A673 (cell line): ENCODE measurements at regions of chr17 and their contacts with region 1.

Region 1: GRCh38 chr17:12909046-12909445 is 108.8 kb downstream of the ELAC2 start:
- DNase-seq: no peak
- H3K4me3 ChIP-seq: no peak overlapping the region
- H3K27ac ChIP-seq: no peak overlapping the region
- H3K4me1 ChIP-seq: no peaks in the 10 kb centered on the region
- H3K27me3 ChIP-seq: peaks cover 19% of the 10 kb centered on the region
- CTCF ChIP-seq: no peak

Region 2: DNA sequence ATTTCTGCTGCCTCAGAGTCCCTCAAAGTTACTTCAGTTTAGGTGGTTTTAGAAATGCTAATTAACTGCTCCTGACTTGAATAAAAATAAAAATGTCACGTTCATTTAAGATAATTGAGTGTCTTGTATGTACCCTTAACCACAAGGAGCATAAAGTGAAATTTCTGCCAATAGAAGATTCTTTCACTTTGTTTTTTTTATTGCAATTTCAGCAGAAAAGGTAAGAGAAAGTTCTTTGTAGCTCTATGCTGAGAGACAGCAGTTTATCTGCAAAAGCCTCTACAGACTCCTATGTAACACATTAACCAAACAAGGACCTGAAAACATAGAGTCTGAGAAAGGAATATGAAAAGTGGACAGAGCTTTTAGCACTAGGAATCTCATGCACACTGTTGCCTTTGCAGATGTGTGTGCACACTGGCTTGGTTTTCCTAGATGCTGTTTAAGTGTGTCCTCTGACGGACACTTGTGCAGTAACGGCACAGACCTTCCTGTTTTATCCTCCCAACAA is 108.1 kb before region 1 on chr17:
- CTCF ChIA-PET with region 1: no interaction called
- POLR2A ChIA-PET with region 1: no interaction called
- intact Hi-C with region 1: no loop called
- DNase-seq: no peak
- H3K4me3 ChIP-seq: no peak overlapping the region
- H3K27ac ChIP-seq: no peak overlapping the region
- H3K4me1 ChIP-seq: no peaks in the 10 kb centered on the region
- H3K27me3 ChIP-seq: no peaks in the 10 kb centered on the region
- CTCF ChIP-seq: no peak

Region 3: GRCh38 chr17:12859520-12859919 is 49.5 kb before region 1 on chr17:
- CTCF ChIA-PET with region 1: no interaction called
- POLR2A ChIA-PET with region 1: no interaction called
- intact Hi-C with region 1: loop called (anchors 5 kb)
- DNase-seq: no peak
- H3K4me3 ChIP-seq: no peak overlapping the region
- H3K27ac ChIP-seq: no peak overlapping the region
- H3K4me1 ChIP-seq: no peaks in the 10 kb centered on the region
- H3K27me3 ChIP-seq: no peaks in the 10 kb centered on the region
- CTCF ChIP-seq: no peak